CD8-positive, alpha-beta memory T cell (primary cell): ENCODE measurements at regions of chr10 and their contacts with region 1.

Region 1: GRCh38 chr10:3811291-3811870 is 26.4 kb upstream of the KLF6 start:
- DNase-seq: peak in 3 of 5 donors; percentile 32 to 70 (median 56)
- H3K4me3 ChIP-seq: peak overlapping the region; percentile 59
- H3K4me3 Mint-ChIP-seq: peak overlapping the region; percentile 64 to 93 (median 85)
- H3K27ac ChIP-seq: peak overlapping the region; percentile 98
- H3K27ac Mint-ChIP-seq: peak overlapping the region in 1 of 8 donors; percentile 99
- H3K4me1 ChIP-seq: peaks cover 58% of the 10 kb centered on the region
- H3K4me1 Mint-ChIP-seq: peaks cover 17 to 27% (median 19%) of the 10 kb centered on the region in 3 donors
- H3K27me3 ChIP-seq: no peaks in the 10 kb centered on the region
- H3K27me3 Mint-ChIP-seq: peaks cover 0 to 1% of the 10 kb centered on the region in 2 donors

Region 2: GRCh38 chr10:3765146-3765545 is 46.2 kb before region 1 on chr10:
- CTCF ChIA-PET with region 1: no interaction called
- POLR2A ChIA-PET with region 1: no interaction called
- DNase-seq: peak in 1 of 5 donors; percentile 21
- H3K4me3 ChIP-seq: peak overlapping the region; percentile 16
- H3K4me3 Mint-ChIP-seq: peak overlapping the region; percentile 18 to 89 (median 63)
- H3K27ac ChIP-seq: no peak overlapping the region
- H3K27ac Mint-ChIP-seq: peak overlapping the region; percentile 38 to 97 (median 80)
- H3K4me1 ChIP-seq: peaks cover 36% of the 10 kb centered on the region
- H3K4me1 Mint-ChIP-seq: peaks cover 59 to 89% (median 80%) of the 10 kb centered on the region in 3 donors
- H3K27me3 ChIP-seq: no peaks in the 10 kb centered on the region
- H3K27me3 Mint-ChIP-seq: no peaks in the 10 kb centered on the region

Region 3: DNA sequence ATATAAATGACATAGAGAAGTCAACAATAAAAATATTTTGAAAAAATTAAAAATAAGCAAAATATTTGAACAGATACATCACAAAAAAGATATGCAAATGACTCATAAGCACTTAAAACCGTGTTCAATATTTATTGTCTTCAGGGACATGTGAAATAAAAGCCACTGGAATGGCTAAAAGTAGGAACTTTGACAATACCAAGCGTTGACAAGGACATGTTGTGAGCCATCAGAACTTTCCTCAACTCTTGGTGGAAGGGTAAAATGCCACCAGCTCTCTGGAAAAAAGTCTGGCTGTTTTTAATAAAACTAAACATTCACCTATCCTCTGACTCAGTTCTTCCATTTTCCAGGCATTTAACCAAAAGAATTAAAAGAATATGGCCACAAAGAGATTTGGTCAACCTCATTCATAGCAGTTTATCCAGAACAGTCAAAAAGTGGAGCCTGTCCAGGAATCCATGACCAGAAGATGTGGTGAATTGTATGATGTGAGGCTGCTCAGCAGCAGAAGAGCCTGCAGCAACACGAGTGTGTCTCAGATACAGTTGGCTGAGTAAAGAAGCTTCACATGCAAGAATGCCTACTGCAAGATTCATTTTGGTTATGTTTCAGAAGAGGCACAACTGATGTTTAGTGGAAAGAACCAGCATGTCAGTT is 19.3 kb before region 1 on chr10:
- CTCF ChIA-PET with region 1: no interaction called
- POLR2A ChIA-PET with region 1: no interaction called
- DNase-seq: no peak
- H3K4me3 ChIP-seq: no peak overlapping the region
- H3K4me3 Mint-ChIP-seq: peak overlapping the region in 1 of 7 donors; percentile 40
- H3K27ac ChIP-seq: no peak overlapping the region
- H3K27ac Mint-ChIP-seq: peak overlapping the region in 1 of 8 donors; percentile 11
- H3K4me1 ChIP-seq: no peaks in the 10 kb centered on the region
- H3K4me1 Mint-ChIP-seq: peaks cover 2 to 12% (median 4%) of the 10 kb centered on the region in 3 donors
- H3K27me3 ChIP-seq: no peaks in the 10 kb centered on the region
- H3K27me3 Mint-ChIP-seq: no peaks in the 10 kb centered on the region

Region 4: DNA sequence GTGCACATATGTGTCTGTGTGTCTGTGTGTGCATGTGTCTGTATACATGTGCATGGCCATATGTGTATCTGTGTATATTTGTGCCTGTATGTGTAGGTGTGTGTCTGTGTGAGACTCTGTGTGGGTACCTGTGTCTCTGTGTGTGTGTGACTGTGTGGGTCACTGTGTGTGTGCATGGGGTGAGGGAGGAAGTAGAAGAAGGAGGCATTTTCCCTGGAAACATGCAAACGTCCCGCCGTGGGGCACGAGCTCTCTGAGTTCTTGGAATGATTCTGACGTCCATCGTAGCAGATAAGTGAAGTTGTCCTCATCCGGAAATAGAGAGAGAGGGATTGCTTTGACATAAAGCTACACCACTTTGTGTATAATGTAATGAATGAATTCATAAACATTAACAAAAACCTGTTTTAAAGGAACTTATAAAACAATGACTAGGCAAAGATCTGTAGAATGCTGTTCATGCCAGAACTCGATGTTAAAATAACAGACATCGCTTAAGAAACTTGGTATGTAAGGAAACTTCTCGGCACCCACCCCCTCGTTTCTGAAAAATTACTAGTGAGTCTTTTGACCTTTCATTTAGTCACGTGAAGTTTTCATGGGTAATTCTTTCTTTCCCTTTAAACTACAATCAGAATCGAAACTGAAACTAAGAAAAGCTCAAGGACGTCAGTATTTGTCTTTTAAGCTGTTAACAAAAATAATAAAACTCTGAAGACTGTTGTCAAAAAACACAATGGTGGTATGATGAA is 17.2 kb after region 1 on chr10:
- CTCF ChIA-PET with region 1: interaction called, 14 read pairs
- POLR2A ChIA-PET with region 1: interaction called, 26 read pairs
- DNase-seq: peak in 2 of 5 donors; percentile 34 to 57
- H3K4me3 ChIP-seq: peak overlapping the region; percentile 35
- H3K4me3 Mint-ChIP-seq: peak overlapping the region; percentile 75 to 88 (median 80)
- H3K27ac ChIP-seq: peak overlapping the region; percentile 67
- H3K27ac Mint-ChIP-seq: peak overlapping the region; percentile 72 to 96 (median 94)
- H3K4me1 ChIP-seq: peaks cover 15% of the 10 kb centered on the region
- H3K4me1 Mint-ChIP-seq: peaks cover 21 to 51% (median 22%) of the 10 kb centered on the region in 3 donors
- H3K27me3 ChIP-seq: no peaks in the 10 kb centered on the region
- H3K27me3 Mint-ChIP-seq: no peaks in the 10 kb centered on the region

Region 5: GRCh38 chr10:3838460-3839437 is 27.4 kb after region 1 on chr10:
- CTCF ChIA-PET with region 1: no interaction called
- POLR2A ChIA-PET with region 1: no interaction called
- DNase-seq: no peak
- H3K4me3 ChIP-seq: no peak overlapping the region
- H3K4me3 Mint-ChIP-seq: peak overlapping the region in 1 of 7 donors; percentile 41
- H3K27ac ChIP-seq: no peak overlapping the region
- H3K27ac Mint-ChIP-seq: no peak overlapping the region
- H3K4me1 ChIP-seq: peaks cover 3% of the 10 kb centered on the region
- H3K4me1 Mint-ChIP-seq: peaks cover 15 to 34% (median 20%) of the 10 kb centered on the region in 3 donors
- H3K27me3 ChIP-seq: no peaks in the 10 kb centered on the region
- H3K27me3 Mint-ChIP-seq: no peaks in the 10 kb centered on the region

Region 6: DNA sequence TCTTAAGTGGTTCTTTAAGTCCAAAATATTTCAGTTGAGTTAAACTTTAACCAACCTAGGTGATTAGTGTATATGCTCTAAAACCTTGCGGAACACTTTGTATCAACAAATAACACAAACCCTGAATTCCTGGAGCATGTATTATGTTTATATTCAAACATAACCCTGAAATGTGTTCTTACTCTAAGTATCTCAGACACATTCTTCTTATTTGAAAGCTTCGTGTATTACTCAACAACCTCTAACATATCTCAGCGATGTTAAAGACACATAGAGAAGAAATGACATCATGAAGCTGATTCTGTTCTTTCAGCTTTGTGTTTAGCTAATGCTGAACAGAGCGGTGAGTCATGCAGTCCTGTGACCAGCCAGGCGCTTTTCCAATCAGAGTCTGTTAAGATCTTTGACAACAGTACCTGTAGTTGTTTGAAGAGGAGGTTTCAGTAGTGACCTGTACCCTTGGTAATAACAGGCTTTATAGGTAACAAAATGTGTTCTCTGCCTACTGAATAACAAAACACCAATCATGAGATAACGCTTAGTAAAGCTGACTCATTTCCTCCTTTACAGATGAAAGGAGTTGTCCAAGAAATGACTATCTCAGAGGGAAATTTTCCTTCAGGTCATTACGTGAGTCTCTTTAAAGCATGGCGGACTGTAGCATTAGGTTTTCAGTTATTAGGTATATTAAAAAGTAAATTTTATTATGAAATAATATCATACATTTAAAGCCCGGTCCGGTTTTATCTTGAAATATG is 40.9 kb after region 1 on chr10:
- CTCF ChIA-PET with region 1: no interaction called
- POLR2A ChIA-PET with region 1: interaction called, 14 read pairs
- DNase-seq: peak in 4 of 5 donors; percentile 46 to 88 (median 55)
- H3K4me3 ChIP-seq: no peak overlapping the region
- H3K4me3 Mint-ChIP-seq: peak overlapping the region in 5 of 7 donors; percentile 6 to 64 (median 37)
- H3K27ac ChIP-seq: peak overlapping the region; percentile 62
- H3K27ac Mint-ChIP-seq: peak overlapping the region; percentile 70 to 95 (median 88)
- H3K4me1 ChIP-seq: peaks cover 12% of the 10 kb centered on the region
- H3K4me1 Mint-ChIP-seq: peaks cover 21 to 32% (median 30%) of the 10 kb centered on the region in 3 donors
- H3K27me3 ChIP-seq: no peaks in the 10 kb centered on the region
- H3K27me3 Mint-ChIP-seq: no peaks in the 10 kb centered on the region